ENCODE measurements at regions of chr12 and their contacts with region 1.

Region 1: GRCh38 chr12:71626098-71626497 is 37.5 kb downstream of the ZFC3H1 start:
- DNase-seq: no peak
- ATAC-seq: peak; percentile 58
- H3K4me3 Mint-ChIP-seq: no peak overlapping the region
- H3K27ac Mint-ChIP-seq: peak overlapping the region; percentile 67
- H3K4me1 Mint-ChIP-seq: peaks cover 21% of the 10 kb centered on the region
- H3K27me3 Mint-ChIP-seq: no peaks in the 10 kb centered on the region
- CTCF ChIP-seq: no peak

Region 2: GRCh38 chr12:71186571-71187288 is 439.4 kb before region 1 on chr12:
- CTCF ChIA-PET with region 1: no interaction called
- POLR2A ChIA-PET with region 1: no interaction called
- intact Hi-C with region 1: no loop called
- DNase-seq: no peak
- ATAC-seq: no peak
- H3K4me3 Mint-ChIP-seq: no peak overlapping the region
- H3K27ac Mint-ChIP-seq: no peak overlapping the region
- H3K4me1 Mint-ChIP-seq: no peaks in the 10 kb centered on the region
- H3K27me3 Mint-ChIP-seq: no peaks in the 10 kb centered on the region
- CTCF ChIP-seq: no peak

Region 3: DNA sequence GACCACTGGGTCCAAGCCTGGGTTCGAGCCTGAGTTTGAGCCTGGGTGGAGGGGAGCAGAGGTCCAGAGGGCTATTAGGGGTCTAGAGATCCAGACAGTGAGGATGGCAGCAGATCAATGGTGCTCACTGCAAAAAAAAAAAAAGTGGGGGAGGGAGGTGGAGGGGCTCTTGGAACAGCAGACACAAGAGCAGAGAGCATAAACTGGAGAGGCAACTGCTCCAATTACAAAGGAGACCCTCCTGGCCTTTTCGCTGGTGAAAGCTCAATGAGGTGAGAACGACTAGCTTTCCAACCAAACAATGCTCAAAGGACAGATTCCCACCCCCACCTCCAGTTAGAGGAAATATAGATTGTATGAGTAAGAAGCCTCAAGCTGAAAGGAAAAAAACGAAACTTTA is 344.1 kb before region 1 on chr12:
- CTCF ChIA-PET with region 1: no interaction called
- POLR2A ChIA-PET with region 1: no interaction called
- intact Hi-C with region 1: no loop called
- DNase-seq: no peak
- ATAC-seq: no peak
- H3K4me3 Mint-ChIP-seq: no peak overlapping the region
- H3K27ac Mint-ChIP-seq: no peak overlapping the region
- H3K4me1 Mint-ChIP-seq: no peaks in the 10 kb centered on the region
- H3K27me3 Mint-ChIP-seq: no peaks in the 10 kb centered on the region
- CTCF ChIP-seq: no peak

Region 4: GRCh38 chr12:71610031-71610795 is 15.9 kb before region 1 on chr12:
- CTCF ChIA-PET with region 1: interaction called, 3 read pairs
- POLR2A ChIA-PET with region 1: no interaction called
- intact Hi-C with region 1: loop called (anchors 2 kb)
- DNase-seq: no peak
- ATAC-seq: peak; percentile 42
- H3K4me3 Mint-ChIP-seq: no peak overlapping the region
- H3K27ac Mint-ChIP-seq: peak overlapping the region; percentile 68
- H3K4me1 Mint-ChIP-seq: peaks cover 7% of the 10 kb centered on the region
- H3K27me3 Mint-ChIP-seq: no peaks in the 10 kb centered on the region
- CTCF ChIP-seq: no peak

Region 5: DNA sequence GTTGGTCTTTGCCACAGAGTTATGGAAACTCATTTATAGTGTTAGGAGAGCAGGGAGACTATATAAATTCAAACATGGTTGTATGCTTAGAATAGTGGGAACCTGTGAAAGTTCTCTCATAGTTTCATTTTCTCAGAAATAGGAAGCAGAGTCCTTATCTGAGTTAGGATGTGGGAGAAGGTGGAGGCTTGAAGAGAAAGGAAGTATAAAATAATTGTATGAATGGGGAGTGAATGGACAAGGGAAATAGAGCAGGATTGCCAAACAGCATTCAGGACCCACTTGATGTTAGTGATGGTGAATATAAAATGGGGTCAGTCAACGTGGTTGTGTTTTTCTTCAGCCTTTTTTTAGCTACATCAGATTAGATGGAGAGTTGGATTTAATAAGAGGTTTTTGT is 278.5 kb after region 1 on chr12:
- CTCF ChIA-PET with region 1: no interaction called
- POLR2A ChIA-PET with region 1: no interaction called
- intact Hi-C with region 1: no loop called
- DNase-seq: no peak
- ATAC-seq: no peak
- H3K4me3 Mint-ChIP-seq: no peak overlapping the region
- H3K27ac Mint-ChIP-seq: no peak overlapping the region
- H3K4me1 Mint-ChIP-seq: no peaks in the 10 kb centered on the region
- H3K27me3 Mint-ChIP-seq: no peaks in the 10 kb centered on the region
- CTCF ChIP-seq: no peak